CD8-positive, alpha-beta T cell (primary cell): ENCODE measurements at regions of chr5 and their contacts with region 1.

Region 1: GRCh38 chr5:134659456-134659855 is 10.9 kb downstream of the SEC24A start:
- DNase-seq: peak in 1 of 9 experiments; percentile 10
- ATAC-seq: peak; percentile 44
- H3K4me3 ChIP-seq: no peak overlapping the region
- H3K4me3 Mint-ChIP-seq: no peak overlapping the region
- H3K27ac ChIP-seq: no peak overlapping the region
- H3K27ac Mint-ChIP-seq: no peak overlapping the region
- H3K4me1 ChIP-seq: peaks cover 4% of the 10 kb centered on the region
- H3K4me1 Mint-ChIP-seq: peaks cover 26% of the 10 kb centered on the region
- H3K27me3 ChIP-seq: no peaks in the 10 kb centered on the region
- H3K27me3 Mint-ChIP-seq: no peaks in the 10 kb centered on the region
- CTCF ChIP-seq: no peak

Region 2: DNA sequence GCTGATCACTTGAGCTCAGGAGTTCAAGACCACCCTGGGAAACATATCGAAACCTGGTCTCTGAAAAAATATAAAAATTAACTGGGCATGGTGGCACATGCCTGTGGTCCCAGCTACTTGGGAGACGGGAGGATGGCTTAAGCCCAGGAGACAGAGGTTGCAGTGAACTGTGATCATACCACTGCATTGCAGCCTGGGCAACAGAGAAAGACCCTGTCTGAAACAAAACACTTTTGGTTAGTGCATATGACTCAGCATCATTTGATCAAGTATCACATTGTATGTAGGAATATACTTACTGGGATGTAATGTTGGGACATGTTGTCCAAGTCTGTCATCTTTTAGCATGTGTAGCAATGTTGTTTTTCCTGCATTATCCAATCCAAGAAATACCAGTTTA is 38.8 kb before region 1 on chr5:
- CTCF ChIA-PET with region 1: no interaction called
- POLR2A ChIA-PET with region 1: no interaction called
- intact Hi-C with region 1: loop called in 1 of 2 experiments (anchors 5 kb)
- DNase-seq: no peak
- ATAC-seq: no peak
- H3K4me3 ChIP-seq: no peak overlapping the region
- H3K4me3 Mint-ChIP-seq: no peak overlapping the region
- H3K27ac ChIP-seq: no peak overlapping the region
- H3K27ac Mint-ChIP-seq: no peak overlapping the region
- H3K4me1 ChIP-seq: no peaks in the 10 kb centered on the region
- H3K4me1 Mint-ChIP-seq: peaks cover 17% of the 10 kb centered on the region
- H3K27me3 ChIP-seq: no peaks in the 10 kb centered on the region
- H3K27me3 Mint-ChIP-seq: no peaks in the 10 kb centered on the region
- CTCF ChIP-seq: no peak